Activated CD4-positive, alpha-beta memory T cell treated with anti-CD3 and anti-CD28 coated beads for 36 hours (primary cell): ENCODE measurements at regions of chr2 and their contacts with region 1.

Region 1: DNA sequence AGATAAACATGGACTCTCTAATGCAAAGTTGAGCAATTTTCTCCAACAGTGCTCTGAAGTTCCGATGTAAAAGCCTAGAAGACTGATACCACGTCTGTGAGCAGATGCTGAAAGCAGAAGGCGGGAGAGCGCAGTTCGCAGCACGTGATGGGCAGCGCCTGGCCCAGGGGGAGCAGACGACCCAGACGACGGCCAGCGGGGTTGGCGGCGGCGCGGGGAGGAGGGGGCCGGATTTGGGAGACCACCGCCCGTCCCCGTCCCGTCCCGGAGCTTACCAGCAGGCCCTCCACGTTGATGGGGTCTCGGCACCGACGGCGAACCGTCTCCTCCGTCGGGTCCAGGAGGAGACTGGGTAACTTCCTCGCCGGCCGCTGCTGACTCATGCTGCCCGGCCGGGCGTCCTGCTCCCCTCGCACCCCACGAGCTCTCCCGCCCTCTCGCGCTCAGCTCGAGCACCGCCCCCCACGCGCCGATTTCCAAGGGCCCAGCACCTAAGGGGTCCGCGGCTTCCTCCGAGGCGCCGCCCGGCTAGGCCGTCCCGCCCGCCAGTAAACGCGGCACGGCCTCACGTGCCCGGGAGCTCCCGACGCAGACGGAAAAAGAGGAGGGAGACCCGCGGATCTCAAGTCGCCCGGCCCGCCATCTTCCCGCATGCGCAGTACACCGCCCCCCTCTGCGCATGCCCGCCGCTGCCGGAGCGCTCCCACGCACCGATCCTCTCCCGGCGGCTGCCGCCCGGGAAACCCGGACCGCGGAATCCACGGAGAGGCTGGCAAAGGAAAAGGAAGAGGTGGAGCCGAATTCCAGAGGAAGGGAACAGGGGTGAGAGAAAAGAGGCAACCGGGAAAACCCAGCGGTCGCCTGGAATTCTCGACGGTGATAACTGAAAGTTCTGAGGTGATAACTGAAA is at the start of gene E2F6:
- DNase-seq: peak; percentile 92
- H3K4me3 Mint-ChIP-seq: peak within 1 kb of the TSS; percentile 91
- H3K27ac Mint-ChIP-seq: peak within 1 kb of the TSS; percentile 83
- H3K4me1 Mint-ChIP-seq: peaks cover 36% of the 10 kb centered on the region
- H3K27me3 Mint-ChIP-seq: no peaks in the 10 kb centered on the region
- total RNA-seq, gene E2F6: 9.9 to 10.3 TPM

Region 2: DNA sequence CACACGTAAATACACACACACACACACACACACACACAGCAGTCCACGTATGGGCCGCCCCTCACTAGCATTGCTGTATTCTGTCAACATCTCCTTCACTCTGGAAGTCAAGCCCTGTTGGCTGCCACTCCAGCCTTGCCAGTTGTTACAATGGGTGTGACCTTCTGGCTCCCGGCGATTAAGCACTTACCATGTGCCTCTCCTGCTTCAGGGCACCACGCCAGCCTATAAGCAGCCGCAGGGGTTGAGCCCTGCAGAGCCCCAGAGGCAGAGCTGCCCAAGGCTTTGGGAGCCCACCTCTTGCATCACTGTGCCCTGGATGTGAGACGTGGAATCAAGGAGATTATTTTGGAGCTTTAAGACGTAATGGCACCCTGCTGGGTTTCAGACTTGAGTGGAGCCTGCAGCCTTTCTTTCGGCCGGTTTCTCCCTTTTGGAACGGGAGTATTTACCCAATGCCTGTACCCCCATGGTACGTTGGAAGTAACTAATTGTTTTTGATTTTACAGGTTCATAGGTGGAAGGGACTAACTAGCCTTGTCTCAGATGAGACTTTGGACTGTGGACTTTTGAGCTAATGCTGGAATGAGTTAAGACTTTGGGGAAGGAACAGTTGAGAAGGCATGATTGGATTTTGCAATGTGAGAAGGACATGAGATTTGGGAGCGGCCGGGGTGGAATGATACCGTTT is 66.9 kb before region 1 on chr2:
- CTCF ChIA-PET with region 1: no interaction called
- POLR2A ChIA-PET with region 1: no interaction called
- intact Hi-C with region 1: no loop called
- DNase-seq: no peak
- H3K4me3 Mint-ChIP-seq: no peak overlapping the region
- H3K27ac Mint-ChIP-seq: no peak overlapping the region
- H3K4me1 Mint-ChIP-seq: no peaks in the 10 kb centered on the region
- H3K27me3 Mint-ChIP-seq: no peaks in the 10 kb centered on the region

Region 3: GRCh38 chr2:11743846-11744553 is 278.2 kb after region 1 on chr2:
- CTCF ChIA-PET with region 1: no interaction called
- POLR2A ChIA-PET with region 1: no interaction called
- intact Hi-C with region 1: loop called (anchors 10 kb)
- DNase-seq: peak; percentile 93
- H3K4me3 Mint-ChIP-seq: peak overlapping the region; percentile 48
- H3K27ac Mint-ChIP-seq: peak overlapping the region; percentile 77
- H3K4me1 Mint-ChIP-seq: peaks cover 54% of the 10 kb centered on the region
- H3K27me3 Mint-ChIP-seq: no peaks in the 10 kb centered on the region

Region 4: GRCh38 chr2:11863513-11864328 is 398.0 kb after region 1 on chr2:
- CTCF ChIA-PET with region 1: no interaction called
- POLR2A ChIA-PET with region 1: no interaction called
- intact Hi-C with region 1: no loop called
- DNase-seq: peak; percentile 76
- H3K4me3 Mint-ChIP-seq: peak overlapping the region; percentile 25
- H3K27ac Mint-ChIP-seq: no peak overlapping the region
- H3K4me1 Mint-ChIP-seq: peaks cover 41% of the 10 kb centered on the region
- H3K27me3 Mint-ChIP-seq: no peaks in the 10 kb centered on the region